ENCODE measurements at regions of chrX and their contacts with region 1.

Region 1: DNA sequence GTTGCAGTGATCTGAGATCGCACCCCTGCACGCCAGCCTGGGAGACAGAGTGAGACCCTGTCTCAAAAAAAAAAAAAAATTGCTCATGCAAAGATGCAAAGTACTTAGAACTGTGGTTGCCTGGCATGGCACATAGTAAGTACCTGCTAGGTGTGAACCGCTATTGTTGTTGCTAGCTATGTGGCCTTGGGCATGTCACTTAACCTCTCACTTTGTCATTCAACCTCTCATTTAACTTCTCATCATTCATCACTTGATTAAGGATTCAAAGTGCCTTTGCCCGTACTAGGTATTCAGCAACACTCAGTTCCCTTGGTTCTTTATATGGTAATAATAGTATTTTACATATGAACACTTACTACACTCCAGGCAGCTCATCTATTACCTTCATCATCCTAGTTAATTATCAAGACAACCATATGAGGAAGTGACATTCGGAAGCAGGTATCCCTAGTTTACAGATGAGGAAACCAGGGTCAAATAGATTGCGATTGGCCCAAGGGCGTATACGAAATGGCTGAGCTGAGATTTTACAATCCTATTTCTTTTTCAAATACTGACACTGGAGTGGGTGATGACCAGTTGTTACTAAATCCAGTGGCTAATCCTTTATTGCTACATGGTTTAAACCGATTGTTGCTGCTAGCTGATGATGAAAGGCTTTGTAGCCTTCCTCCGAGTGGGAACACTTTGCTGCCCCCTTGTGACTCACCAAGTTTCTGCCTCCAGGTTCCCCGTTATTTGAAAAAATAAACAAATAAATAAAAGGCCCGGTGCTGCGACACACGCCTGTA is 28.8 kb upstream of the SOWAHD start:
- DNase-seq: no peak
- H3K4me3 ChIP-seq: no peak overlapping the region
- H3K27me3 ChIP-seq: no peaks in the 10 kb centered on the region
- CTCF ChIP-seq: peak; percentile 60

Region 2: DNA sequence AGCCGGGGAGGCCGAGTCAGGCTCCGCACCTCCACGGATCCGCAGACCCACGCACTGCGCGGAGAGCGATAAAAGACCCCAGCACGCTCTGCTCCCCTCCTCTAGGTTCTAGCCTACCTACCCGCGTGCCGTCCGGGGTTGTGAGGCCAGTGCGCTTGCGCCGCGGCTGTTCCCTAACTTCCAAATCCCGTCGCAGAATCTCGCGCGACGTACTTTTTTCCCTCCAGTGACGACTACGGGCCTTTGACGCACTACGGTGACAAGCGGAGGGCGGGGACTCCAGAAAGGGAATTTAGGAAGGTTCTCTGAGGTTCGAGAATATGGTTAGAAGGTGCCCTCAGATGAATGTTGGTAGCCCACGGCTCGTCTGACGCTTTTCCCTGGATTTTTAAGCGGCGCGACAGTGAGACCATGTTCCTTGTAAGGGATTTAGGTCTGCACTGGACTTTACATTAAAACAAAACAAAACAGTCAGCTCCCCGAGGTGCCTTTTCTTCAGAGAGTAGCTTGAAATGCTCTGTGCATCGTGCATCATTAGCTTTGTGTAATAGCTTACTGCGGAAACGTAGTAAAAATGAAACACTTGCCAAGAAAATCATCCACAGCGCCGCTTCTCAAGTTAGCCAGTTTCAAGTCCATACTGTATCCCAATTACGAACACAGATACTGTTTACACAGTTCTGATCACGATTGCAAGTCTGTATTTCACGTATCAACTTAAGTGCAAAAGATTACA is 123.2 kb before region 1 on chrX and contains the start of gene NKRF:
- CTCF ChIA-PET with region 1: interaction called, 11 read pairs
- POLR2A ChIA-PET with region 1: no interaction called
- DNase-seq: peak; percentile 51
- H3K4me3 ChIP-seq: peak within 1 kb of the TSS; percentile 75
- H3K27me3 ChIP-seq: no peaks in the 10 kb centered on the region
- CTCF ChIP-seq: no peak
- polyA plus RNA-seq, gene NKRF: 2.2 and 3.5 TPM in 2 replicates

Region 3: DNA sequence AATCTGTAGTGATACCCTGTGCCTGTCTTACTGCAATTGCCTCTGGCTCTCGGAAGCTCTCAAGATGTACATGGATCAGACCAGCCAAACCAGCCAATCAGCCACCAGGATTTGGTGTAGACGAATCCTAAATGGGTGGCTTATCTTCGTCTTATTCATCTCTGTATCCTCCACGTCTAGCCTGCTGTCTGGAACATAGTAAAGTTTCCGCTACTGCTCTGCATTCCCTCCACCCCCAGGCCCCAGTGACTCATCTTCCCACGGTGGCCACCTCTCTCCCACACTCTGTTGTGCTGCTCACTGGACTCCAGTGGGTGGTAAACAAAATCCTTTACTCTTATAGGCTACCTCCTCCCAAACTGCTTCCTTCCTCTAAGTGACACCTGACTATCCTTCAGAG is 74.5 kb before region 1 on chrX:
- CTCF ChIA-PET with region 1: interaction called, 12 read pairs
- POLR2A ChIA-PET with region 1: no interaction called
- DNase-seq: peak; percentile 44
- H3K4me3 ChIP-seq: no peak overlapping the region
- H3K27me3 ChIP-seq: no peaks in the 10 kb centered on the region
- CTCF ChIP-seq: no peak